Activated T-helper 2 cell treated with anti-CD3 and anti-CD28 coated beads, Interferon-gamma antibody, Interleukin-2, Interleukin-4, amounts not matched to agents 10 μg/mL and 5 μg/mL and 100 μg/mL, durations not matched to agents 14 hours and 24 hours and 36 hours (primary cell): ENCODE measurements at regions of chr6 and their contacts with region 1.

Region 1: GRCh38 chr6:31652925-31653718 is 661 bp upstream of the BAG6 start:
- DNase-seq: no peak
- H3K4me3 Mint-ChIP-seq: peak overlapping the region; percentile 87
- H3K27ac Mint-ChIP-seq: peak overlapping the region; percentile 100
- H3K4me1 Mint-ChIP-seq: peaks cover 44% of the 10 kb centered on the region
- H3K27me3 Mint-ChIP-seq: no peaks in the 10 kb centered on the region

Region 2: DNA sequence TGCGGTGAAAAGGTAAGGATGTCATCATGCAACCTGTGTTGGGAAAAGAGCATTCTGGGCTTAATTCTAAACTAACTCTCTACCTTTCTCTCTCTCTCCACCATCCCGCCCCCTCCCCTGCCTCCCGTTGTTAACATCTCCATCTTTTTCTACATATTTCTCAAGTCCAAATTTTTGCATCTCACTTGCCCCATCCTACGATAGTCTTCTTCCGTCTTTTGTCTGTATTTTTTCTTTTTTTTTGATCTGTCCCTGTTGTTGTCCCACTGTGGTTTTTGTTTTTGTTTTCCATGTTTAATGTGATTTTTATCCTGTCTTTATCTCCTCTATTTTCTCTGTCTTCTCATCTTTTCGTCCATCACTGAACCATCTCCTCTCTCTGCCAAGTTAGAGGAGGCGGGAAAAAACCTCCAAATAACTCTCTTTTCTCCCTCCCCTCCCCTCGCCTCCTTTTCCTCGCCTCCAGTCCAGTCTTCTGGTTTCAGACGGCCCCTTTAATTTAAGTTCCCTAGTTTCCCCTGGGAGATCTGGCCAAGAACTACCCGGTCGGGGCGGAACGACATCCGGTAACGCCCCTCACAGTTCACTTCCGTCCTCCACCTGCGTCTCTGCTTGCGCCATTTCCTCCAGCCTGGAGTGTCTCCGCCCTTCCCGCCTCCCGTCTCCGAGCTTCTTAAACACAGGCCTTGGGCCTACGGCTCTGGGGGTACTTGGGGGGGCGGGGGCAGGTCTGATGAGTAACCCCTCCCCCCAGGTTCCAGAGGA is 106.0 kb before region 1 on chr6 and contains the start of gene NFKBIL1:
- intact Hi-C with region 1: loop called (anchors 1 kb)
- DNase-seq: peak; percentile 90
- H3K4me3 Mint-ChIP-seq: peak within 1 kb of the TSS; percentile 84
- H3K27ac Mint-ChIP-seq: peak within 1 kb of the TSS; percentile 78
- H3K4me1 Mint-ChIP-seq: peaks cover 28% of the 10 kb centered on the region
- H3K27me3 Mint-ChIP-seq: no peaks in the 10 kb centered on the region
- total RNA-seq, gene NFKBIL1: 15.7 and 17.6 TPM in 2 replicates

Region 3: GRCh38 chr6:31619805-31620585 is 33.1 kb before region 1 on chr6:
- intact Hi-C with region 1: loop called (anchors 1 kb)
- DNase-seq: peak; percentile 98
- H3K4me3 Mint-ChIP-seq: peak overlapping the region; percentile 81
- H3K27ac Mint-ChIP-seq: peak overlapping the region; percentile 94
- H3K4me1 Mint-ChIP-seq: peaks cover 39% of the 10 kb centered on the region
- H3K27me3 Mint-ChIP-seq: no peaks in the 10 kb centered on the region

Region 4: DNA sequence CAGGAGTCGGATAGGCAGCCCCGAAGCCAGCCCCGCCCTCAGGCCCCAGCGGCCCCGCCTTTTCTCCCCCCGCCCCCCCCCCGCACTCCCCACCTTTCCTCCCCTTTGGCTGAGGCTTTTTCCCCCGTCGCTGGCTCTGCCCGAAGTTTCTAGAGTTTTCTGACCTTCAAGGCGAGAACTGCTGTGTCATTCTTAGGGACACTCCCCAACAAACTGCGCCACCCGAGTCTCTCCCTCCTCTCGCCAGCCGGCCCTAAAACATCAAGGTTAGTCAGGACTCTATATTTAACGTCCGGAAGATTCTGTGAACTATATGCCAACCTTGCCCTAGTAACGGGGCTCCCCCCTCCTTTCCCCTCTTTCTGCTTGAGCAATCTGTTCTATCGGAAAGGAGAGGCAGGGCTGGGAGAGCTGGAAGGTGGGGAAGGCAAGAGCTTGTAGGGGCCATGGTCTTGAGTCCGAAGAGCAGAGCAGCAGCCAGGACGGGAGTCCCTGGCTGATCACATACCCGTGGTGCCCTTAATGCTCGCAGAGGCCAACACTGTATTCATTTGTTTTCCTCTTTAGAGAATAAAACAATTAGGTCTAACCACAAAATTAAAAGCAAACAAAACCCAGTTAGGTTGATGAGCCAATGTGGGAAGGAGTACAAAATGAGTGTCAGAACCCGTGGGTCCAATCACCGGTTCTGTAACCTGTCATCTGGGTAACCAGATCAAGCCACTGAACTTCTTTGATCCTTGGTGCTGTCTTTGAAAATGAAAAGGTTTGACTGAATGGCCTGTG is 169.1 kb after region 1 on chr6:
- intact Hi-C with region 1: loop called (anchors 1 kb)
- DNase-seq: peak; percentile 56
- H3K4me3 Mint-ChIP-seq: peak overlapping the region; percentile 92
- H3K27ac Mint-ChIP-seq: peak overlapping the region; percentile 94
- H3K4me1 Mint-ChIP-seq: peaks cover 44% of the 10 kb centered on the region
- H3K27me3 Mint-ChIP-seq: no peaks in the 10 kb centered on the region